B cell (primary cell): ENCODE measurements at regions of chr10 and their contacts with region 1.

Region 1: GRCh38 chr10:92886334-92886961 is 38.1 kb downstream of the EXOC6 start:
- DNase-seq: no peak
- ATAC-seq: no peak
- H3K4me3 ChIP-seq: no peak overlapping the region
- H3K4me3 Mint-ChIP-seq: no peak overlapping the region
- H3K27ac ChIP-seq: no peak overlapping the region
- H3K27ac Mint-ChIP-seq: no peak overlapping the region
- H3K4me1 ChIP-seq: no peaks in the 10 kb centered on the region
- H3K4me1 Mint-ChIP-seq: peaks cover 9% of the 10 kb centered on the region
- H3K27me3 ChIP-seq: no peaks in the 10 kb centered on the region
- H3K27me3 Mint-ChIP-seq: no peaks in the 10 kb centered on the region
- CTCF ChIP-seq: no peak

Region 2: GRCh38 chr10:92839191-92840085 is 47.0 kb before region 1 on chr10:
- CTCF ChIA-PET with region 1: interaction called, 22 read pairs
- POLR2A ChIA-PET with region 1: no interaction called
- intact Hi-C with region 1: no loop called
- DNase-seq: peak; percentile 36
- ATAC-seq: peak; percentile 36
- H3K4me3 ChIP-seq: no peak overlapping the region
- H3K4me3 Mint-ChIP-seq: no peak overlapping the region
- H3K27ac ChIP-seq: no peak overlapping the region
- H3K27ac Mint-ChIP-seq: no peak overlapping the region
- H3K4me1 ChIP-seq: no peaks in the 10 kb centered on the region
- H3K4me1 Mint-ChIP-seq: peaks cover 4% of the 10 kb centered on the region
- H3K27me3 ChIP-seq: no peaks in the 10 kb centered on the region
- H3K27me3 Mint-ChIP-seq: no peaks in the 10 kb centered on the region
- CTCF ChIP-seq: peak; percentile 33

Region 3: GRCh38 chr10:92901819-92902251 is 15.4 kb after region 1 on chr10:
- CTCF ChIA-PET with region 1: interaction called, 20 read pairs
- POLR2A ChIA-PET with region 1: no interaction called
- intact Hi-C with region 1: no loop called
- DNase-seq: peak; percentile 20
- ATAC-seq: no peak
- H3K4me3 ChIP-seq: no peak overlapping the region
- H3K4me3 Mint-ChIP-seq: no peak overlapping the region
- H3K27ac ChIP-seq: no peak overlapping the region
- H3K27ac Mint-ChIP-seq: no peak overlapping the region
- H3K4me1 ChIP-seq: no peaks in the 10 kb centered on the region
- H3K4me1 Mint-ChIP-seq: peaks cover 6% of the 10 kb centered on the region
- H3K27me3 ChIP-seq: no peaks in the 10 kb centered on the region
- H3K27me3 Mint-ChIP-seq: no peaks in the 10 kb centered on the region
- CTCF ChIP-seq: no peak

Region 4: GRCh38 chr10:93074147-93074596 is 187.7 kb after region 1 on chr10:
- CTCF ChIA-PET with region 1: interaction called, 7 read pairs
- POLR2A ChIA-PET with region 1: no interaction called
- intact Hi-C with region 1: loop called (anchors 5 kb)
- DNase-seq: peak; percentile 64
- ATAC-seq: peak; percentile 35
- H3K4me3 ChIP-seq: peak overlapping the region in 4 of 5 experiments; percentile 15 to 55 (median 45)
- H3K4me3 Mint-ChIP-seq: peak overlapping the region; percentile 88
- H3K27ac ChIP-seq: no peak overlapping the region
- H3K27ac Mint-ChIP-seq: no peak overlapping the region
- H3K4me1 ChIP-seq: peaks cover 38 to 40% of the 10 kb centered on the region in 2 donors
- H3K4me1 Mint-ChIP-seq: peaks cover 38% of the 10 kb centered on the region
- H3K27me3 ChIP-seq: peaks cover 0 to 71% (median 39%) of the 10 kb centered on the region in 4 experiments
- H3K27me3 Mint-ChIP-seq: peaks cover 59% of the 10 kb centered on the region
- CTCF ChIP-seq: no peak